ENCODE measurements at regions of chrX and their contacts with region 1.

Region 1: GRCh38 chrX:43564953-43565352 is 91.1 kb upstream of the MAOA start:
- DNase-seq: no peak
- ATAC-seq: no peak

Region 2: GRCh38 chrX:43357741-43358140 is 207.2 kb before region 1 on chrX:
- intact Hi-C with region 1: no loop called
- DNase-seq: no peak
- ATAC-seq: no peak

Region 3: GRCh38 chrX:43646800-43647199 is 81.8 kb after region 1 on chrX:
- intact Hi-C with region 1: loop called (anchors 5 kb)
- DNase-seq: no peak
- ATAC-seq: no peak

Region 4: GRCh38 chrX:44088510-44089144 is 523.7 kb after region 1 on chrX:
- intact Hi-C with region 1: no loop called
- DNase-seq: no peak
- ATAC-seq: no peak

Measured in Right ventricle myocardium inferior (tissue), 1 donor.